Breast epithelium (tissue), 4 donors: ENCODE measurements at regions of chr19 and their contacts with region 1.

Region 1: DNA sequence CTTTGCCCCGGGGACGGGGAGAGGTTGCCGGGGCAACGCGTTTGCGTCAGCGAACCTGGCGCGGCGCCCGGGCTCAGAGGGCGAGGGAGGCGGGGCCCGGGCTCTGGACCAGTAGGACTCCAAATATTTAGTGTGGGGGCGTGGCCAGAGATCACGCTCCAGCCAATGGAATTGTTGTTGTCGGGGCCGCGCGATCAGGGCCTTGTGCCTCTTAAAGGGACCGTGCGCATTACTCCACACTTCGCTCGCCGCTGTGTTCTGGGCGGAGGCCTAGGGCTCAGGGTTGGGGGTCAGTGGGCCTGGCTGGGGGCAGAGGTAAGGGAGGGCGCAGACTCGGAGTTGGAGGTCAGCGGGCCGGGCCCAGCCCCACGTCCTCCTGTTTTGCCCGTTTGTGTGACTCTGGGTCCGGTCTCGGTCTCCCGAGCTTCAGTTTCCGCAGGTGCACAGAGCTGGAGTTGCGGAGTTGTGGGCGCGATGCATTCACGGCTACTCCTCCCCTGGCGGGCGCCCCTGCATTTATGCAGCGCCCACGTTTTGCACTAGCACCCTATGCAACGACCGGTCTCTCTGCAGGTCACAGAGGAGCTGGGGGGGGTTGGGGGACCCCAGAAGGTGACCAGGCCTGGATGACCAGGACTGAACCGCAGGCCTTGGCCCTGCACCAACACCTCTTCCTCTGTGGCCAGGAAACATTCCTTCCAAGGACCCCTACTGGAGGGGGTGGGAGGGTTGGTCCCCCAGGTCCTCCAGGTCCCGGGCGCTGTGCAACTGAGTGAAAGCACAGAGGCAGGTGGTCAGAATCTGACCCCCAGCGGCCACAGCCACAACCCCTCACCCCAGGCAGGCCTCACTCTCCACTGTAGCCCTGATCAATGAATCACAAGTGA is 10.7 kb upstream of the MKNK2 start:
- DNase-seq: peak; percentile 99
- H3K4me3 ChIP-seq: peak overlapping the region; percentile 61 to 89 (median 75)
- H3K27ac ChIP-seq: peak overlapping the region; percentile 99 to 100
- H3K4me1 ChIP-seq: peaks cover 23 to 34% of the 10 kb centered on the region in 2 donors
- H3K27me3 ChIP-seq: no peaks in the 10 kb centered on the region
- CTCF ChIP-seq: no peak
- POLR2A ChIP-seq: no peak

Region 2: DNA sequence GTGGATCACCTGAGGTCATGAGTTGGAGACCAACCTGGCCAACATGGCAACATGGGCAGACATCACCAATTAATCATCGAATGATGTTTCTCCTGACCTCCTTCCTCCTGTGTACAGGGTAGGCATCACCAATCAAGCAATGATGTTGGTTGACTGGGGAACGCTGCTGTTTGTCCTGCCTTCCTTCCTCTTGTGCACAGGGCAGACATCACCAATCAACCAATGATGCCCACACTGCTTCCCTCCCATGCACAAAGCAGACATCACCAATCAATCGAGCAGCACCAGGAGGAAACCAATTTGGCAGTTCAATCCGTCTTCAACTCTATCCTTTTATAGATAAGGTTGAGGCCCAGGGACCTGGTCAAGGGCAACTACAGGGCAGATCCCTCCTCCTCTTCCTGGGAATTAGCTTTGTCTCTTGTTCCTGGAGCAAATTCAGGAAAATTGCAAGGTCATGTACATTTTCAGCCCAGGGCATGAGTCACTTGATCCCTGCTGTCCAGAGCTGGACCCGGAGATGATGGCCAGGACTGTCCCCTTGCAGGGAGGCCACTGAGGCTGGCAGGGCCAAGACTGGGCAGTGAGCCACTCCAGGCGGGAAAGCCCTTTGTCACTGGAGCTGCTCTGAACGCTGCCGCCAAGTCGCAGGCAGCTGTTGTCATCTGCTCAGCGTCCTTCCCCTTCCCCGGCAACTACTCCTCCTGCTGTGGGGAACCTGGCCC is 126.1 kb before region 1 on chr19:
- intact Hi-C with region 1: loop called (anchors 10 kb)
- DNase-seq: no peak
- H3K4me3 ChIP-seq: no peak overlapping the region
- H3K27ac ChIP-seq: no peak overlapping the region
- H3K4me1 ChIP-seq: no peaks in the 10 kb centered on the region
- H3K27me3 ChIP-seq: no peaks in the 10 kb centered on the region
- CTCF ChIP-seq: no peak
- POLR2A ChIP-seq: no peak

Region 3: GRCh38 chr19:2016041-2016807 is 45.5 kb before region 1 on chr19:
- intact Hi-C with region 1: loop called (anchors 5 kb)
- DNase-seq: peak; percentile 78 to 80
- H3K4me3 ChIP-seq: peak overlapping the region in 2 of 3 donors; percentile 72 to 91
- H3K27ac ChIP-seq: peak overlapping the region; percentile 74 to 78
- H3K4me1 ChIP-seq: peaks cover 0 to 6% of the 10 kb centered on the region in 2 donors
- H3K27me3 ChIP-seq: no peaks in the 10 kb centered on the region
- CTCF ChIP-seq: no peak
- POLR2A ChIP-seq: no peak

Region 4: DNA sequence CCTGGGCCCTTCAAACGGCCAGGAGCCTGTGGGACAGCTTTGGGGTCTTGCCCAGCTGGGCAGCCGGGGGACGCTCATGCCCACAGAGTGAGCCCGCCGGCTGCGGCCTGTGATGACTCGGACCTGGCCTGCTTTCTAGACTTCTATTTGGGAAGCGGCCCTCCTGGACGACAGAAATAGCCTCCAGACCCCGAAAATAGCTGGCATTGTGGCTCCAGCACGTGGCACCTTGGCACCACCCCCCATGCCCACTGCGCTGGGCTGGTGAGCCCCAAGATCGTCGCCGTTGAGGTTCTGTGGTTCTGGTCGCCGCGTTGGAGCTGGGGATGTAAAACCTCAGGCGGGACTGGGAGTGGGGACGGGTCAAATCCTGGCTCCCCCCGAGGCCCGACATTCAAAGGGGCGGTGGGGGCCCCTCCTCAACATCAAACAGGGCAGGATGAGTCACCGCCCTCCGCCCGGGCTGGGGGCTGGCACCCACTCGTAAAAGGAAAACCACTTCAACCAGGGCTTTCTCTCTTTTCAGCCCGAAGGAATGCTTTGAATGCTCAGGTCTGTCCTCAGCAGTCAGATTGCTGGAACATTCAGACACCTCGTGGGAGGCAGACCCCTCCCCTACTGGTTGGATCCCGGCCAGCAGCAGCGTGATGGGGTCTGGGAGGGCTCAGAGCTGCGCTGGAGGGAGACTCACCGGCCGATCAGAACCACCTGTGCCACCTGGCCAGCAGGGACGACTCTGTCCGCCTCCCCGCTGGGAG is 456.3 kb after region 1 on chr19:
- intact Hi-C with region 1: no loop called
- DNase-seq: no peak
- H3K4me3 ChIP-seq: no peak overlapping the region
- H3K27ac ChIP-seq: no peak overlapping the region
- H3K4me1 ChIP-seq: no peaks in the 10 kb centered on the region
- H3K27me3 ChIP-seq: no peaks in the 10 kb centered on the region
- CTCF ChIP-seq: no peak
- POLR2A ChIP-seq: no peak